ENCODE measurements at regions of chr2 and their contacts with region 1.

Region 1: GRCh38 chr2:11477994-11478393 is 12.0 kb upstream of the E2F6 start:
- DNase-seq: peak; percentile 85
- ATAC-seq: peak; percentile 80
- H3K4me3 ChIP-seq: no peak overlapping the region
- H3K27ac ChIP-seq: no peak overlapping the region
- H3K4me1 ChIP-seq: peaks cover under 1% of the 10 kb centered on the region; the same call in 1 of the 2 replicates
- H3K27me3 ChIP-seq: peaks cover 48% of the 10 kb centered on the region
- CTCF ChIP-seq: peak; percentile 76
- POLR2A ChIP-seq: no peak
- RAD21 ChIP-seq: peak; percentile 74

Region 2: GRCh38 chr2:11621410-11621809 is 143.4 kb after region 1 on chr2:
- CTCF ChIA-PET with region 1: no interaction called
- POLR2A ChIA-PET with region 1: no interaction called
- dilution Hi-C with region 1: no loop called
- in situ Hi-C with region 1: no loop called
- intact Hi-C with region 1: no loop called
- DNase-seq: no peak
- ATAC-seq: no peak
- H3K4me3 ChIP-seq: no peak overlapping the region
- H3K27ac ChIP-seq: no peak overlapping the region
- H3K4me1 ChIP-seq: no peaks in the 10 kb centered on the region
- H3K27me3 ChIP-seq: peaks cover 24% of the 10 kb centered on the region
- CTCF ChIP-seq: no peak
- POLR2A ChIP-seq: no peak
- RAD21 ChIP-seq: no peak

Region 3: DNA sequence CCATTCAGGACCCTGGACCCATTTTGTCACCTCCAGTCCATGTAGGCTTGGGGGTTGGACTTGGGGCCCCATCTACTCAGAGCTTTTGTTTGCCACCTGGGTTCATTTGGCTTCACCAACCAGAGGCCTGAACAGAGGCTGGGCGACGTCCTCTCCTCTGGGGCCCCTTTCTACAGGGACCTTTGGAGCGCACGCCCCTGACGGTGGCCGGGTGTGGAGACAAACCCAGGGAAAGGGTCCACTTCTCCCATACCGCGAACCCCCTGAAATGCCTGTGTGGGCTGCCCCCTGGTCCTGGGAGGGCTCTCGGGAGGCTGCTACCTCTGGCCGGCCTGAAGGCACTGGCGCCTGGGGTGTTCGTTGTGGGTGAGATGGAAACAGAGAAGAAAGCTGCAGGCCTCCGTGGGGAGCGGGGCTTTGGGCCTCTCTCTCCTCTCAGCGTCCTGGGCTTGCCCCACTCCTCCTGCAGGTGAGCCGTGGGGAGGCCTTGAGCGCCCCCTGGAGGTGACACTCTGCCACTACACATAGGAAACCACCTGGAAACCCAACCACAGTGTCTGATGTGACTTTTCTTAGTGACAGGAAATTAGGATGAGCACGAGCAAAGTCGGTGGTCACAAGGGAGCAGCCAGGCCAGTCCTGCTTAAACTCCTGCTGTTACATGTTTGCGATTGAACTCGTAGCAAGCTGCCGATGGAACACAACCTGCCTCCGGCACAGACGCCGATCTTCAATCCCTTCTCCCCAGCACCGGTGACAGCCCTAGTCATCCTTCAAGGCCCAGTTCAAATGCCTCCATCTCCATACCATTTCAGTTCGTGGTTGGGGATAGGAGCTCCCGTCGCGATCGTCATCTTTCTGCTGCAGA is 204.0 kb after region 1 on chr2:
- CTCF ChIA-PET with region 1: no interaction called
- POLR2A ChIA-PET with region 1: no interaction called
- dilution Hi-C with region 1: no loop called
- in situ Hi-C with region 1: no loop called
- intact Hi-C with region 1: loop called (anchors 5 kb)
- DNase-seq: no peak
- ATAC-seq: no peak
- H3K4me3 ChIP-seq: no peak overlapping the region
- H3K27ac ChIP-seq: no peak overlapping the region
- H3K4me1 ChIP-seq: peaks cover 8% of the 10 kb centered on the region; the same call in 1 of the 2 replicates
- H3K27me3 ChIP-seq: peaks cover 46% of the 10 kb centered on the region
- CTCF ChIP-seq: peak; percentile 61
- POLR2A ChIP-seq: no peak
- RAD21 ChIP-seq: peak; percentile 51

Region 4: DNA sequence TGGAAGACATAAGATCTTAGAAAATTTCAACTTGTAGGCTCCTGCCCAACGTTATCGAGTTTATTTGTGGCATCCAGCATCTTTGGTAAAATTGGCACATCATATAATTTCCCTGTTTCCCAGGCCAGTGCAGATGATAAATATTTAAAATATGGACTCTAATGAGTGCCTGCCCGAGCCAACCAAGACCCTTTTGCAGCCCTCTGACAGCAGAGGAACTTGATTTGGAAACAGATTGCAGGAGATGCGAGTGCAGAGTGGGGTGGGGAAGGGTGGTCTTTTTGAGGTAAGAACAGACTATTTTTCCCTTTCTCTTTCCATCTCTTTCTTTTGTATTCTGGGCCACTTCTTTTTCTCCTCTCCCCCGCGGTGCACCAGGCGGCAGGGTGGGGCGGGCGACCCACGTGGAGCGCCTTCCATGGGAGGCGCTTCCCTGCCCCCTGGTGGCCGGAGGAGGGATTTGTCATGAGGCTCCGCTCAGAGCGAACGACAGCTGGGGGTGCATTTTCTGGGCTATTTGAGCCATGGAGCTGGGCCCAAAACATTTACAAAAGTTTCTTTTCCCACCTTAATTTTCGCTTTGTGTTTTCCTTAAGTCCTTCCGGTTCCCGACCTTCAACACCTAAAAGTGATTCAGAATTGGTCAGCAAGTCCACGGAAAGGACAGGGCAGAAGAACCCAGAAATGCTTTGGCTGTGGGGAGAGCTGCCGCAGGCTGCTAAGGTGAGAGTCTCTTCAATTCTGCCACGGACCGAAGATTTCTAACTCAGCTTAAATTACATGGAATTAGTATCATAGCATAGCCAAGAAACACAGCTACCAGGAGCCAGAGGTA is 301.1 kb after region 1 on chr2:
- CTCF ChIA-PET with region 1: no interaction called
- POLR2A ChIA-PET with region 1: no interaction called
- dilution Hi-C with region 1: no loop called
- in situ Hi-C with region 1: loop called (anchors 10 kb)
- intact Hi-C with region 1: loop called (anchors 1 kb)
- DNase-seq: peak; percentile 48
- ATAC-seq: peak; percentile 92
- H3K4me3 ChIP-seq: no peak overlapping the region
- H3K27ac ChIP-seq: no peak overlapping the region
- H3K4me1 ChIP-seq: peaks cover 5% of the 10 kb centered on the region
- H3K27me3 ChIP-seq: no peaks in the 10 kb centered on the region
- CTCF ChIP-seq: peak; percentile 97
- POLR2A ChIP-seq: no peak
- RAD21 ChIP-seq: peak; percentile 95

Measured in IMR-90 (cell line).